Mammary epithelial cell (primary cell): ENCODE measurements at regions of chr16 and their contacts with region 1.

Region 1: GRCh38 chr16:77499373-77500285 is 64.8 kb upstream of the ADAMTS18 start:
- DNase-seq: peak; percentile 6
- H3K4me3 ChIP-seq: no peak overlapping the region
- H3K27ac ChIP-seq: no peak overlapping the region
- H3K4me1 ChIP-seq: no peaks in the 10 kb centered on the region
- H3K27me3 ChIP-seq: no peaks in the 10 kb centered on the region
- CTCF ChIP-seq: no peak

Region 2: GRCh38 chr16:77536809-77537208 is 37.2 kb after region 1 on chr16:
- CTCF ChIA-PET with region 1: no interaction called
- dilution Hi-C with region 1: loop called (anchors 5 kb)
- in situ Hi-C with region 1: no loop called
- intact Hi-C with region 1: no loop called
- DNase-seq: no peak
- H3K4me3 ChIP-seq: no peak overlapping the region
- H3K27ac ChIP-seq: no peak overlapping the region
- H3K4me1 ChIP-seq: no peaks in the 10 kb centered on the region
- H3K27me3 ChIP-seq: no peaks in the 10 kb centered on the region
- CTCF ChIP-seq: no peak

Region 3: GRCh38 chr16:77868478-77868877 is 368.8 kb after region 1 on chr16:
- CTCF ChIA-PET with region 1: no interaction called
- dilution Hi-C with region 1: no loop called
- in situ Hi-C with region 1: no loop called
- intact Hi-C with region 1: no loop called
- DNase-seq: no peak
- H3K4me3 ChIP-seq: no peak overlapping the region
- H3K27ac ChIP-seq: no peak overlapping the region
- H3K4me1 ChIP-seq: no peaks in the 10 kb centered on the region
- H3K27me3 ChIP-seq: no peaks in the 10 kb centered on the region
- CTCF ChIP-seq: no peak